ENCODE measurements at regions of chr7 and their contacts with region 1.

Region 1: GRCh38 chr7:77798394-77799077 is at the starts of genes PHTF2 and TMEM60:
- DNase-seq: peak; percentile 90
- H3K4me3 Mint-ChIP-seq: peak within 1 kb of the TSS; percentile 95
- H3K27ac Mint-ChIP-seq: peak within 1 kb of the TSS; percentile 92
- H3K4me1 Mint-ChIP-seq: peaks cover 59% of the 10 kb centered on the region
- H3K27me3 Mint-ChIP-seq: no peaks in the 10 kb centered on the region
- total RNA-seq, gene PHTF2: 30.9 and 31.2 TPM in 2 replicates
- total RNA-seq, gene TMEM60: 9.0 and 11.0 TPM in 2 replicates

Region 2: GRCh38 chr7:77687747-77688144 is 110.8 kb before region 1 on chr7:
- intact Hi-C with region 1: loop called (anchors 2 kb)
- DNase-seq: peak; percentile 1
- H3K4me3 Mint-ChIP-seq: peak overlapping the region; percentile 3
- H3K27ac Mint-ChIP-seq: peak overlapping the region; percentile 32
- H3K4me1 Mint-ChIP-seq: peaks cover 35% of the 10 kb centered on the region
- H3K27me3 Mint-ChIP-seq: no peaks in the 10 kb centered on the region

Region 3: GRCh38 chr7:77830649-77831355 is 32.3 kb after region 1 on chr7:
- intact Hi-C with region 1: loop called (anchors 1 kb)
- DNase-seq: no peak
- H3K4me3 Mint-ChIP-seq: no peak overlapping the region
- H3K27ac Mint-ChIP-seq: no peak overlapping the region
- H3K4me1 Mint-ChIP-seq: peaks cover 46% of the 10 kb centered on the region
- H3K27me3 Mint-ChIP-seq: peaks cover 2% of the 10 kb centered on the region

Region 4: DNA sequence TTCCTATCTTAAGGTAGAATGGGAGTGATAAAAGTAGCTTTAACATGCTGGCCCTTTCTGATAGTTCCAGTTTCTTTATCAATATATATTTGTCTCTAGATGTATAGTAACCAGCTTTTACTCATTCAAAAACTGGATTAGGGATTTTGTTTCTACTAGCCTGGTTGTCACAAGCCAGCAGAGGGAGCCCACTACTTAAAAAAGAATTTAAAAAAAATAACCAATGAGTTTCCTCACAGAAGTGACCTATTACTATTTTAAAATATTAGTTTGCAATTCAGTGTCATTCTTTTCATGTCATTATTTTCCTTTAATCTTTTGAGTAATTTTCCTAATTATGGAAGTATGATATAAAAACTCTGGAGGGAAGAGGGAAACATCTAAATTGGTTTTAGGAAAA is 142.1 kb after region 1 on chr7:
- intact Hi-C with region 1: loop called (anchors 1 kb)
- DNase-seq: no peak
- H3K4me3 Mint-ChIP-seq: no peak overlapping the region
- H3K27ac Mint-ChIP-seq: no peak overlapping the region
- H3K4me1 Mint-ChIP-seq: peaks cover 11% of the 10 kb centered on the region
- H3K27me3 Mint-ChIP-seq: no peaks in the 10 kb centered on the region